ENCODE measurements at regions of chr5 and their contacts with region 1.

Region 1: GRCh38 chr5:171783051-171783450 is 2.6 kb upstream of the SMIM23 start:
- DNase-seq: no peak
- H3K4me3 Mint-ChIP-seq: no peak overlapping the region
- H3K27ac Mint-ChIP-seq: no peak overlapping the region
- H3K4me1 Mint-ChIP-seq: no peaks in the 10 kb centered on the region
- H3K27me3 Mint-ChIP-seq: no peaks in the 10 kb centered on the region

Region 2: DNA sequence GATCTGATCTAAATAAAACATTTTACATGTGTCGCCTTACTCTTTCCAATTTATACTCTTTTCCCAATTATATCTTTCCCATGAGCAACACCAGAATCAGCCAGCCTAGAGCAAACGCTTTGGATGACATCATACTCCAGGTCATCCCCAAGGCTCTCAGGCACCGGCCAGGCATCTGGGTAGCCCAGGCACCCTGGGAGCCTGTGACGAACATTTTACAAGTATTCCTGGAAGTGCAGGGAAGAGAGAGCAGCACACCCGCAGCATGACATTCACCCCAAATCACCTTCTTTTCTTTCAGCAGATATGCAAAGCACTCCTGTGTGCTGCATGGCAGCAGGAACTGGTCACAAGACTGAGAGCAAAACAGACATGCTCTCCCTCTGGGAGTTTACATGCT is 73.1 kb before region 1 on chr5:
- intact Hi-C with region 1: loop called (anchors 5 kb)
- DNase-seq: no peak
- H3K4me3 Mint-ChIP-seq: no peak overlapping the region
- H3K27ac Mint-ChIP-seq: no peak overlapping the region
- H3K4me1 Mint-ChIP-seq: no peaks in the 10 kb centered on the region
- H3K27me3 Mint-ChIP-seq: no peaks in the 10 kb centered on the region

Measured in activated T-helper 1 cell treated with anti-CD3 and anti-CD28 coated beads, Interleukin-12 subunit alpha, Interleukin-12 subunit beta, Interleukin-2, Interleukin-4 antibody, amounts not matched to agents 30 ng/mL and 10 ng/mL and 1 ng/mL, durations not matched to agents 14 hours and 24 hours and 36 hours (primary cell).